ENCODE measurements at regions of chr9 and their contacts with region 1.

Region 1: GRCh38 chr9:79233542-79233941 is 338.2 kb upstream of the TLE4 start:
- DNase-seq: peak; percentile 22
- ATAC-seq: peak; percentile 81
- H3K4me3 ChIP-seq: no peak overlapping the region
- H3K27ac ChIP-seq: no peak overlapping the region
- H3K4me1 ChIP-seq: no peaks in the 10 kb centered on the region
- H3K27me3 ChIP-seq: no peaks in the 10 kb centered on the region
- CTCF ChIP-seq: peak; percentile 25 to 55 (median 46); a peak in 5 of 6 replicates
- POLR2A ChIP-seq: no peak
- RAD21 ChIP-seq: peak; percentile 35; the same call in 1 of the 2 replicates

Region 2: DNA sequence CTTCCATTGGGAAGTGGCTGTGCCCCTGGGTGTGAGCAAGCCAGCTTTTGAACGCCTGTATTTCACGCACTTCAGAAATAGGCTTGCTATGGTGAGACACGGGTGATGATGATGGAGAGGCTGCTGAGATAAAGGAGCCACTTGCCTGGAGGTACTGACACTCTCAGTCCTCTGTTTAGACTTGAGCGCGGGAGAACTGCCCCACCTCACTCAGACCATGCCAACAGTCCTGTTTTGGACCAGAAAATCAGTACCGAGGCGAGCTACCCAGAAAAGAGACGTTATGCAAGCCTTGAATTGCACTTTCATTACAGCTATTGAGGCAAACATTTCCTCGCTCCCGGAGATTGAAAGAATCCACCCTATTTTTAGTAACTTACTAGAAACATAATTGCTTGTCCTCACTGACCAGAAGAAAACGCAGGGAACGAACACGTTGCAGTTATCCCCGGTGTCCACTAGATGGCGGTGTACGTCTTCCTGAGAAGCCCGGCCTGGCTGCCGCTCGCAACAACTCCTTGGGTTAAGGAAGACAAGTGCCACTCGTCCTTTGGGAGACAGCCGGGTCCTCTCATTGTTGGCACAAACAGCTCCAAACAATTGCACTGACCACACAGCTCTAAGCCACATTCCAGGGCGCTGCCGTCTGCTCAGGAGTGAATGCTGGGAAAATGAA is 794.2 kb before region 1 on chr9:
- CTCF ChIA-PET with region 1: no interaction called
- POLR2A ChIA-PET with region 1: no interaction called
- RAD21 ChIA-PET with region 1: no interaction called
- intact Hi-C with region 1: loop called (anchors 5 kb)
- DNase-seq: peak; percentile 62
- ATAC-seq: peak; percentile 90
- H3K4me3 ChIP-seq: no peak overlapping the region
- H3K27ac ChIP-seq: no peak overlapping the region
- H3K4me1 ChIP-seq: no peaks in the 10 kb centered on the region
- H3K27me3 ChIP-seq: peaks cover 9% of the 10 kb centered on the region; the same call in 1 of the 2 replicates
- CTCF ChIP-seq: peak; percentile 57 to 97 (median 87); a peak in 5 of 6 replicates
- POLR2A ChIP-seq: no peak
- RAD21 ChIP-seq: peak; percentile 85

Region 3: GRCh38 chr9:78601957-78602565 is 631.5 kb before region 1 on chr9:
- CTCF ChIA-PET with region 1: no interaction called
- POLR2A ChIA-PET with region 1: no interaction called
- RAD21 ChIA-PET with region 1: no interaction called
- intact Hi-C with region 1: loop called (anchors 10 kb)
- DNase-seq: peak; percentile 22
- ATAC-seq: peak; percentile 64; the same call in 1 of the 2 replicates
- H3K4me3 ChIP-seq: no peak overlapping the region
- H3K27ac ChIP-seq: no peak overlapping the region
- H3K4me1 ChIP-seq: no peaks in the 10 kb centered on the region
- H3K27me3 ChIP-seq: peaks cover 10% of the 10 kb centered on the region; the same call in 1 of the 2 replicates
- CTCF ChIP-seq: peak; percentile 44 to 86 (median 69); a peak in 5 of 6 replicates
- POLR2A ChIP-seq: no peak
- RAD21 ChIP-seq: peak; percentile 72

Region 4: GRCh38 chr9:79116041-79116440 is 117.5 kb before region 1 on chr9:
- CTCF ChIA-PET with region 1: no interaction called
- POLR2A ChIA-PET with region 1: no interaction called
- RAD21 ChIA-PET with region 1: no interaction called
- intact Hi-C with region 1: no loop called
- DNase-seq: no peak
- ATAC-seq: no peak
- H3K4me3 ChIP-seq: no peak overlapping the region
- H3K27ac ChIP-seq: no peak overlapping the region
- H3K4me1 ChIP-seq: no peaks in the 10 kb centered on the region
- H3K27me3 ChIP-seq: no peaks in the 10 kb centered on the region
- CTCF ChIP-seq: no peak
- POLR2A ChIP-seq: no peak
- RAD21 ChIP-seq: no peak